Activated CD4-positive, alpha-beta memory T cell treated with anti-CD3 and anti-CD28 coated beads for 36 hours (primary cell): ENCODE measurements at regions of chr12 and their contacts with region 1.

Region 1: DNA sequence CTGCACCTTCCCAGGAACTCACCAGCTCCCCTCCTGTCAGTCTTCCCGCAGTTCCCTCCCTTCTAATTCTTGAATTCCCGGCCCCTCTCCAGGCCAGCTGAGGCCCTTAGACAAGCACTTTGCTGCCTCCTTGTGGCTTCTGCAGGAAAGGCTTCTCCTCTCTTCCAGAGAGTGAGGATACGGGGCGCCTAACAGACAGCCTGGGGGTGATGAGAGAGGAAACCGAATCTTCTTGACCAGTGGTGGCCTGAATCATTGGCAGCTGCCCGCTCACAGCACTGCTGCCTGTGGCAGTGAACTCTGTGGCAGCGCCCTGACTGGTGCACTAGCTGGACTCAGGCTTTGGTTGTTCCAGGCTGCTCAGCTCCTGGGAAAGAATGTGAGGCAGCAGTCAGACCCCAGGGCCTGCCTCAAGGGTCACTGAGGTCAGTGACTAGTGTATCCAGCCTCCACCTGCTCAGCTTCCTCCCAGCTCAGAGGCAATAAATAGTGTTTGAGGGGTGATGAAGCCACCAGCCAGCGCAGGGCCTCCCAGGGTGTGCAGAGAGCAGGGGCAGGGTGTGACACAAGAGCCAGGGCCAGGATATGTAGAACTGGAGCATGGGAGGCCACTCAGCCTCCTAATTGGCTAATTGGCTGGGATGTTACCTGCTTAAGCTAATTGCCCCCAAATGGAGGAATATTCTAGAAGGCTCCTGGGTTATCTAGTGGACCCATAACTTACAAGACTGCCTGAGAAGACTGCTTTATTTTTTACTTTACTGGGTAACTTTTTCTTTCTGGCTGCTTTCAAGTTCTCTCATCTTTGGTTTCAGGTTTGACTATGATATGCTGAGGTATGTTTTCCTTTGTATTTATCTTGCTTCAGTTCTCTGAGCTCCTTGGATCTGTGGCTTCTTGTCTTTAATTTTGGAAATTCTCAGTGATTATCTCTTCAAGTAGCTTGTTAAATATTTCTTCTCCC is 12.9 kb upstream of the MCRS1 start:
- DNase-seq: peak; percentile 65
- H3K4me3 Mint-ChIP-seq: no peak overlapping the region
- H3K27ac Mint-ChIP-seq: peak overlapping the region; percentile 8
- H3K4me1 Mint-ChIP-seq: peaks cover 18% of the 10 kb centered on the region
- H3K27me3 Mint-ChIP-seq: no peaks in the 10 kb centered on the region

Region 2: DNA sequence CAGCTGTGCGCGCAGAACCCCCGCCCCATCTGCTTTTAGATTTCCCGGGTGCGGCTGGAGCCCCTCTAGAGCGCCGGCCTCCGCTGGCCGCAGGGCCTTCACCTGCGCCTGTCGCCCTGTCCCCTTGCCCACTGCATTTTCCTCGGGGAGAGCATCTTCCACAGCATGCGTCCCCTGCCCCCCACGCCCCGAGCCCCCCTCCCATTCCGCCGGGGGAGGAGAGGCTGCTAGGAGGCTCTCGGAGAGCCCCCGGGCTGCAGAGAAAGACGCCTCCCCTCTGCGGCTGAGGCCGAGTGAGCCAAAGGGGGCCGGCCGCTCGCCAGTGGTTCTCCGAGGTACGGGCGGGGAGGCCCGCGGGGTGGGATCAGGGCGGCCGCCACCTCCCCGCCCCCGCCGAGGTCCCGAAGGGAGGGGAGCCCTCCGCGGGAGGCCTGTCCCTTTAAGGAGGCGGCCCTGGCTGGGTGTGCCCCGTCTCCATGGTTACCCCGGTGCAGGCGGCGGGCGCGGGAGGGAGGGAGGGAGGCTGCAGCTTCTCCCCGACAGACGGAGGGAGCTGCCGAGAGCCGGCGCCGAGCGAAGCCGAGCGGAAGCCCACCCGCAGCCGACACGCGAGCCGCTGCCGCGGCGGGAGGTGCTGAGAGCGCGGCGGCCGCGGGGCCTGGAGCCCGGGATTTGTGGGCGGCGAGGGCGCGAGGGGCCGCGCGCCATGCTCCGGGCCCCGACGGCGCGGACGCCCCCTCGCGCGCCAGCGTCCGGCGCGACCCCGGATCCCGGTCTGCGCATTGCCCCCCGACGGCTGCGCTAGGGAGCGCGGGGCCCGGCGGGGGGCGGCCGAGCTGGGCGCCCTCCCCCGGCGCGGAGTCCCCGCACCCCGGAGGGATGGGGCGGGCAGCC is 42.1 kb before region 1 on chr12 and contains the start of gene KCNH3:
- CTCF ChIA-PET with region 1: interaction called, 10 read pairs
- POLR2A ChIA-PET with region 1: no interaction called
- intact Hi-C with region 1: no loop called
- DNase-seq: peak; percentile 88
- H3K4me3 Mint-ChIP-seq: peak within 1 kb of the TSS; percentile 57
- H3K27ac Mint-ChIP-seq: no peak within 1 kb of the TSS
- H3K4me1 Mint-ChIP-seq: peaks cover 6% of the 10 kb centered on the region
- H3K27me3 Mint-ChIP-seq: peaks cover 15% of the 10 kb centered on the region
- total RNA-seq, gene KCNH3: 1.2 to 1.3 TPM

Region 3: DNA sequence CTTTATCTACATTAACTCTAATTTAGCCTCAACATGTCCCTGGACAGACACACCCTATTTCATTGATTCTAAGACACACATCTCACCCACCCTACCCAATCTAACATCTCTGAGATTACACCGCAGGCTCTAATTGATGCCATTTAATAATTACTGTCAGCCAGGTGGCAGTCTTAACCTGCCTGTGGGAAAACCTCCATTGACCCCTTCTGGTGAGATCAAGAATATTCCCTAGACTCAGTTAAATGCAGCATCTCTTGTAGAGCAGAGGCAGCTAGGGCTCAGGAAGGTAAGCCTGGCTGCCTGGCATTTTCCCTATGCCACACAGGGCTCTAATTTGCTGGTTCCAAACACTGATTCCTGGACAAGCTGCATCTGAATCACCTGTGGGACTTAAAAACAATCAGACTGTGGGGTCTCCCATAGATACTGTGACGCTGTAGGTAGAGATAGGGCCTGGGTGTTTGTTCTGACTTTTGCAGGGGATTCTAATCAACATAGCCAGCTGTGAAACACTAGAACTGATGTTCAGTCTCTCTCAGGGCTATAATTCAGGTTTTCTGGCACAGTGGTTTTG is 27.3 kb before region 1 on chr12:
- CTCF ChIA-PET with region 1: interaction called, 13 read pairs
- POLR2A ChIA-PET with region 1: no interaction called
- intact Hi-C with region 1: no loop called
- DNase-seq: no peak
- H3K4me3 Mint-ChIP-seq: no peak overlapping the region
- H3K27ac Mint-ChIP-seq: no peak overlapping the region
- H3K4me1 Mint-ChIP-seq: peaks cover 3% of the 10 kb centered on the region
- H3K27me3 Mint-ChIP-seq: peaks cover 4% of the 10 kb centered on the region

Region 4: GRCh38 chr12:49567611-49568441 is 13.0 kb before region 1 on chr12 and contains the start of gene MCRS1:
- CTCF ChIA-PET with region 1: interaction called, 25 read pairs
- POLR2A ChIA-PET with region 1: interaction called, 3 read pairs
- intact Hi-C with region 1: no loop called
- DNase-seq: peak; percentile 90
- H3K4me3 Mint-ChIP-seq: peak within 1 kb of the TSS; percentile 98
- H3K27ac Mint-ChIP-seq: peak within 1 kb of the TSS; percentile 96
- H3K4me1 Mint-ChIP-seq: peaks cover 47% of the 10 kb centered on the region
- H3K27me3 Mint-ChIP-seq: no peaks in the 10 kb centered on the region
- total RNA-seq, gene MCRS1: 52.3 to 56.8 TPM

Region 5: DNA sequence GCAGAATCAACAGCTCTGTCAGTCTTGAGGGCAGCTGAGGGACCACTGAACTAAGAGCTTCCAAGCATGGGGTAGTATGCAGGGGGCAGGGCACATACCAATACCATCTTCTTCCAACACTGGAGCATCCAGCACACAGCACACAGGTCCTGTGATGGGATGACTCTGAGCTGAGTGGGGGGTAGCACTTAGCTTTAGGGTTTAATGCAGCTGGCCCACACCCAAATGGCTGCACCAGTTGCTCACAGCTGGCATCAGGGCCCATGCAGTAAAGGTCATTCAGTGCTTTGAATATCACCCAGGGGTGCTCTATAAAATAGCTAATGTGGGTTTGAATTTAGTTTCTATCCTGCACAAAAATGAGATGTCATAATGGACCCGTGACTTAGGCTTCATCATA is 22.9 kb after region 1 on chr12:
- CTCF ChIA-PET with region 1: interaction called, 10 read pairs
- POLR2A ChIA-PET with region 1: no interaction called
- intact Hi-C with region 1: no loop called
- DNase-seq: no peak
- H3K4me3 Mint-ChIP-seq: no peak overlapping the region
- H3K27ac Mint-ChIP-seq: no peak overlapping the region
- H3K4me1 Mint-ChIP-seq: no peaks in the 10 kb centered on the region
- H3K27me3 Mint-ChIP-seq: no peaks in the 10 kb centered on the region